Transverse colon (tissue), 4 donors: ENCODE measurements at regions of chr5 and their contacts with region 1.

Region 1: DNA sequence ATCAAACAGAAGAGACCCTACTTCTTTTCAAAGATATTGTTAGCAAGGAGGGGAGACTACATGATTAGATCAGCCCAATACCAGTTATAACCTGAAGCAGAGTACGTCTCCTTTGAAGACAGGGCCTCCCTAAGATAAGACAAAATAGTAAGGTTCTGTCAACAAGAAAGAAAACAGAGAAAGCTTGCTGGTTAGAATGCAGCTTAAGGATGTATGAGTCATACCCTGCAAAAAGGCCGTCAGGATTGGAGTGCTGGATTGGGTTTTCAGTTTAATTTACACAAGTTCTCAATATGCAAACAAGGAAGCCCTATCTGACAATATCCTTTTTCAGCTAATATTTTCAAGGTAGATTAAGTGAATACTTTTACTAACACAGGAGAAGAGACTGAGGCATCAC is 1581.2 kb upstream of the WWC1 start:
- DNase-seq: no peak
- H3K4me3 ChIP-seq: no peak overlapping the region
- H3K27ac ChIP-seq: no peak overlapping the region
- H3K4me1 ChIP-seq: no peaks in the 10 kb centered on the region
- H3K27me3 ChIP-seq: no peaks in the 10 kb centered on the region
- CTCF ChIP-seq: no peak
- EP300 ChIP-seq: no peak
- POLR2A ChIP-seq: no peak

Region 2: GRCh38 chr5:166058660-166059059 is 651.6 kb before region 1 on chr5:
- in situ Hi-C with region 1: no loop called
- intact Hi-C with region 1: no loop called
- DNase-seq: no peak
- H3K4me3 ChIP-seq: no peak overlapping the region
- H3K27ac ChIP-seq: no peak overlapping the region
- H3K4me1 ChIP-seq: no peaks in the 10 kb centered on the region
- H3K27me3 ChIP-seq: no peaks in the 10 kb centered on the region
- CTCF ChIP-seq: no peak
- EP300 ChIP-seq: no peak
- POLR2A ChIP-seq: no peak

Region 3: GRCh38 chr5:166695326-166695725 is 15.0 kb before region 1 on chr5:
- in situ Hi-C with region 1: no loop called
- intact Hi-C with region 1: loop called (anchors 1 kb)
- DNase-seq: no peak
- H3K4me3 ChIP-seq: no peak overlapping the region
- H3K27ac ChIP-seq: no peak overlapping the region
- H3K4me1 ChIP-seq: no peaks in the 10 kb centered on the region
- H3K27me3 ChIP-seq: no peaks in the 10 kb centered on the region
- CTCF ChIP-seq: no peak
- EP300 ChIP-seq: no peak
- POLR2A ChIP-seq: no peak

Region 4: DNA sequence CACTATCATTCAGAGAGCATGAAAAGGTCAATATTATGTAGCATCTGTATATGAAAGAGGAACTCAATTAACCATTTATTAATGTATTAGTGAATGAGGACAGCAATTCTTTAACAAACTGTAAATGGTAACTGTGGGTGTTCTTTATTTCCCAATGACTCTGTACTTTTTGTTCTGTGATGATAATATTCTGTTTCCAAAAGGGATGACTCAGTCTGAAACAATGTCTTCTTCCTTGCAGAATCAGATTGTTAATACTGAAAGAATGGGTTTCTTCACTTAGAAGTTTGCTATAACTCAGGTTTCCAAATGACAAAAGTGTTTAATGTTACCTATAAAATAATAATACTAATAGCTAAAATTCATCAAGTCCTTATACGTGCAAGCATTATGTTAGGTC is 62.5 kb after region 1 on chr5:
- in situ Hi-C with region 1: no loop called
- intact Hi-C with region 1: no loop called
- DNase-seq: no peak
- H3K4me3 ChIP-seq: no peak overlapping the region
- H3K27ac ChIP-seq: no peak overlapping the region
- H3K4me1 ChIP-seq: no peaks in the 10 kb centered on the region
- H3K27me3 ChIP-seq: no peaks in the 10 kb centered on the region
- CTCF ChIP-seq: no peak
- EP300 ChIP-seq: no peak
- POLR2A ChIP-seq: no peak